ENCODE measurements at regions of chr6 and their contacts with region 1.

Region 1: DNA sequence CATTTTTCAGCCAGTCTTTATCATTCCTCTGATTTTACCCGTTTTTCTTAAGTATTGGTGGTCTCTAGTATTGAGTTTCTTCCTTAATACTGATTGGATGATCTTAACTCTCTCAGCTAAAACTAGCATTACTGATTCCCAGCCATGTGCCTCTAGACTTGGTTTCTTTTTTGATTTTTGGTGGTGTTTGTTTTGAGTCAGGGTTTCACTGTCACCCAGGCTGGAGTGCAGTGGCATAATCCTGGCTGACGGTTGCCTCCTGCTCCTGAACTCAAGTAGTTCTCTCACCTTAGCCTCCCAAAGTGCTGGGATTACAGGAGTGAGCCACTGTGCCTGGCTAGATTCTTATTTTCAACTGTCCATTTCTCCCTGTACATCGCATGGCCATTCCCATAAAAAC is 24.9 kb downstream of the DPPA5 start:
- DNase-seq: no peak
- H3K4me3 ChIP-seq: no peak overlapping the region
- H3K4me3 Mint-ChIP-seq: no peak overlapping the region
- H3K27ac Mint-ChIP-seq: no peak overlapping the region
- H3K4me1 ChIP-seq: no peaks in the 10 kb centered on the region
- H3K4me1 Mint-ChIP-seq: peaks cover 7% of the 10 kb centered on the region
- H3K27me3 ChIP-seq: no peaks in the 10 kb centered on the region
- H3K27me3 Mint-ChIP-seq: peaks cover 8% of the 10 kb centered on the region
- CTCF ChIP-seq: no peak

Region 2: GRCh38 chr6:73129653-73130443 is 199.4 kb before region 1 on chr6:
- CTCF ChIA-PET with region 1: no interaction called
- POLR2A ChIA-PET with region 1: no interaction called
- intact Hi-C with region 1: loop called (anchors 5 kb)
- DNase-seq: peak; percentile 73 to 88
- H3K4me3 ChIP-seq: no peak overlapping the region
- H3K4me3 Mint-ChIP-seq: no peak overlapping the region
- H3K27ac Mint-ChIP-seq: no peak overlapping the region
- H3K4me1 ChIP-seq: no peaks in the 10 kb centered on the region
- H3K4me1 Mint-ChIP-seq: no peaks in the 10 kb centered on the region
- H3K27me3 ChIP-seq: no peaks in the 10 kb centered on the region; the same call in 1 of the 2 replicates
- H3K27me3 Mint-ChIP-seq: peaks cover 13% of the 10 kb centered on the region
- CTCF ChIP-seq: peak; percentile 97

Region 3: GRCh38 chr6:73180763-73181619 is 148.2 kb before region 1 on chr6:
- CTCF ChIA-PET with region 1: interaction called, 3 read pairs
- POLR2A ChIA-PET with region 1: no interaction called
- intact Hi-C with region 1: loop called (anchors 5 kb)
- DNase-seq: peak in 1 of 2 experiments; percentile 17
- H3K4me3 ChIP-seq: no peak overlapping the region
- H3K4me3 Mint-ChIP-seq: no peak overlapping the region
- H3K27ac Mint-ChIP-seq: no peak overlapping the region
- H3K4me1 ChIP-seq: no peaks in the 10 kb centered on the region
- H3K4me1 Mint-ChIP-seq: no peaks in the 10 kb centered on the region
- H3K27me3 ChIP-seq: no peaks in the 10 kb centered on the region
- H3K27me3 Mint-ChIP-seq: peaks cover 4% of the 10 kb centered on the region
- CTCF ChIP-seq: peak; percentile 58 to 86

Region 4: DNA sequence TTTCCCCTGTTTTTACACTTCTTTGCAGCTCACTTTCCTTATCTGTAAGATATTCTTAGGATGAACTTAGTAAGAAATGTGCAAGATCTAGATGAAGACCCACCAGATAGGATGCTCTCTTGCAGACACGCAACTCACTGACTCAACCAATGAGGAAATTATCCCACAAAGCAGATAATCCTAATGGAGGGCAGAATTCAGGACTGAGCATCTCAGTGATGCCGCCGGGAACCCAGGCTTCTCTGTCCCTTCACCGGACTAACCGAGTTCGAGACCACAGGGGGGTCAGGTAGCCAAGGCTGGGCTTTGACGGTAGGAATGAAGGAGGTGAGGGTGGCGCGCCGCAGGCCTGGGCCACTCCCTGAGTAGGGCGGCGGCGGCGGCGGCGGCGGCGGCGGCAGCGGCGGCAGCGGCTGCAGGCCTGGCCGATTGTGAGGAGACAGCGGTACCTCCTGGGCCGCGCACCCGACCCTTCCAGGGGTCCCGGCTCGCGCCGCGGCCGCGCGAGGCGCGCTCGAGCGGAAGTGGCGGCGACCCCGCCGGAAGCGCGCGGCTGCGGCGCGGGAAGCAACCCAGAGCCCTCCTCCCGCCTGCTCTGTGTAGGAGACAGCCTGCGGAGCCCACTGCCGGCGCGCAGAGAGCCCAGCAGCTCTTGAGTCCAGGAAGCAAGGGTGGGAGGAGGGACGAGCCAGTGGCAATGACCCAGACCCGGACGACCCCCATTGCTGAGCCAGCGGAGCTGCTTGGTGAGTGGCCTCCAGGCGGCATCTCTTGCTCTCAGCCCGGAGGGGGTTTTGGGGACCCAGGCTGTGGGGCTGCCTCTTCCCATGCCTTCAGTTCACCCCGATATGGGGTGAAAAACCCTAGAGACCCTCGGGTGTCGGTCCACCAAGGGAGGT is 66.3 kb before region 1 on chr6 and contains the start of gene KHDC1:
- CTCF ChIA-PET with region 1: no interaction called
- POLR2A ChIA-PET with region 1: no interaction called
- intact Hi-C with region 1: no loop called
- DNase-seq: peak; percentile 62 to 66
- H3K4me3 ChIP-seq: peak within 1 kb of the TSS; percentile 78
- H3K4me3 Mint-ChIP-seq: peak within 1 kb of the TSS; percentile 76
- H3K27ac Mint-ChIP-seq: peak within 1 kb of the TSS; percentile 5
- H3K4me1 ChIP-seq: peaks cover 16% of the 10 kb centered on the region
- H3K4me1 Mint-ChIP-seq: peaks cover 7% of the 10 kb centered on the region
- H3K27me3 ChIP-seq: no peaks in the 10 kb centered on the region
- H3K27me3 Mint-ChIP-seq: no peaks in the 10 kb centered on the region
- CTCF ChIP-seq: no peak
- total RNA-seq, gene KHDC1: 8.1 and 8.6 TPM in 2 replicates

Region 5: DNA sequence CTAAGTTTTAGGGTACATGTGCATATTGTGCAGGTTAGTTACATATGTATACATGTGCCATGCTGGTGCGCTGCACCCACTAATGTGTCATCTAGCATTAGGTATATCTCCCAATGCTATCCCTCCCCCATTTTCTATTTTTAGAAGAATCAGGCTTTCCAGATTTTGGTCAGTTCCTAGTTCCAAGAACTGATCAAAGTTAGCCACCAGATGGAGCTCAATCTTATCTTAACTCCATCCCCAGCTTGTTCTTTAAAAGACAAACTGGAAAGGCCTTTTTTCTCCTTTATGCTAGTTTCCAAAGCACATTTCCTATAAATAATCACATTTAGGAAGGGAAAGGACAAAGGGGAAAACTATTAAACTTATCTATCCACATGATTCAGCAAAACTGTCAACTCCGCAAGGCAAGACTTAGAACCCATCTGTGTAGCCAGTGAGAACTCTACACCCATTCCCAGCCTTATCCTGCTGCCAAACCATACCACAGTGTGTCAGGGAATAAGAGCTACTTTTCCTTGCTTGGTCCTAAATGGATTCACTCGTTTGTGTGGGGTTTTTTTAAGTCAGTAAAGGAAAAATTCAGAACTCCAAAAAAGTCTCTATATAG is 43.4 kb before region 1 on chr6:
- CTCF ChIA-PET with region 1: interaction called, 60 read pairs
- POLR2A ChIA-PET with region 1: interaction called, 3 read pairs
- intact Hi-C with region 1: loop called (anchors 1 kb)
- DNase-seq: peak in 1 of 2 experiments; percentile 42
- H3K4me3 ChIP-seq: no peak overlapping the region
- H3K4me3 Mint-ChIP-seq: no peak overlapping the region
- H3K27ac Mint-ChIP-seq: no peak overlapping the region
- H3K4me1 ChIP-seq: peaks cover 23% of the 10 kb centered on the region; the same call in 1 of the 2 replicates
- H3K4me1 Mint-ChIP-seq: peaks cover 9% of the 10 kb centered on the region
- H3K27me3 ChIP-seq: no peaks in the 10 kb centered on the region
- H3K27me3 Mint-ChIP-seq: no peaks in the 10 kb centered on the region
- CTCF ChIP-seq: peak; percentile 19 to 56

Region 6: DNA sequence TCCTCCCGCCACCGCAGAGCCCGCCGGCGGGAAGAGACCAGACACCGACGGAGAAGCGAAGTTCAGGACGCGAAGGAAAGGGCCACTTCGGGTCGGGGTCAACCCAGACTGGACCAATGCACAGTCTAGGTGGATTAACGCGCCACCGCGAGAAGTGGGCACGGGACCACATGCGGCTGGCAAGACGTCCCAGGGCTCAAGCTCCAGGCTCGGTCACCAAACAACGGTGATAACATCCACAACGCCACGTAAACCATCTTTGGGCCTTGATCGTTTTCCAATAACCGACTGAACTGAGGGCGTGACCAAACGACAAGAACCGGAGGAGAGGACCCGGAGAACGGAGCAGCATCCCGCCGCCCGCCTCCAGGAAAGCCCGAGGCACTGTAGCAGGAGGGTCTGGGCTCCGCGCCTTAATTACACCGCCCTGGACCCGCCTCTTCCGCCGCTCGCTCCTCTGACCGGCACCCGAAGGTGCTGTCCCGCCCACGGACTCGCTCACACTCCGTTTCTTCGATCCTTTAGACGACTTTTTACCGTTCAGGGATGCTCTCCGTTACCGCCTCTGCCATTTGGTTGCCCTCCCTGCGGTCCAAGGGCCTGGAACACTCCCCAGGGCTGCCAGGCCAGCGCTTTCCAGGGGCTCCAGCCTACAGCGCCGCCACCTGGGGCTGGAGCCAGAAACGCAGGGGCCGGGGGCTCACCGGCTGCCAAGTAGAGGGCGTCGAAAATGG is 19.3 kb before region 1 on chr6:
- CTCF ChIA-PET with region 1: interaction called, 22 read pairs
- POLR2A ChIA-PET with region 1: no interaction called
- intact Hi-C with region 1: no loop called
- DNase-seq: peak; percentile 74 to 77
- H3K4me3 ChIP-seq: peak overlapping the region; percentile 52
- H3K4me3 Mint-ChIP-seq: peak overlapping the region; percentile 100
- H3K27ac Mint-ChIP-seq: peak overlapping the region; percentile 98
- H3K4me1 ChIP-seq: peaks cover 5% of the 10 kb centered on the region; the same call in 1 of the 2 replicates
- H3K4me1 Mint-ChIP-seq: peaks cover 15% of the 10 kb centered on the region
- H3K27me3 ChIP-seq: no peaks in the 10 kb centered on the region
- H3K27me3 Mint-ChIP-seq: no peaks in the 10 kb centered on the region
- CTCF ChIP-seq: peak; percentile 40 to 87

Region 7: DNA sequence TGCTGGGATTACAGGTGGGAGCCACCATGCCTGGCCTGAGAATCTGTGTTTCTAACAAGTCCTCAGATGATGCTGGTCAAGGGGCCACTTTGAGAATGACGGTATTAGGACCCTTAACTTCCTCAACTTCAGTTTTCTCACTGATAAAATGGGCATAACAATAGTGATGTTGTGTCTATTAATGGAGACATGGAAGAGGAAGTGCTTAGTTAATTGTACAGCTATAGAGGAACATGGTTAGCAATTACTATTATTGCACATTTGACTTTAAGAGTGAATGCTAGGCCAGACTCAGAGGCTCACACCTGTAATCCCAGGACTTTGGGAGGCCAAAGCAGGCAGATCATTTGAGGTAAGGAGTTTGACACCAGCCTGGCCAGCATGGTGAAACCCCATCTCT is 12.1 kb after region 1 on chr6:
- CTCF ChIA-PET with region 1: no interaction called
- POLR2A ChIA-PET with region 1: no interaction called
- intact Hi-C with region 1: no loop called
- DNase-seq: no peak
- H3K4me3 ChIP-seq: no peak overlapping the region
- H3K4me3 Mint-ChIP-seq: no peak overlapping the region
- H3K27ac Mint-ChIP-seq: no peak overlapping the region
- H3K4me1 ChIP-seq: peaks cover 7% of the 10 kb centered on the region; the same call in 1 of the 2 replicates
- H3K4me1 Mint-ChIP-seq: peaks cover 13% of the 10 kb centered on the region
- H3K27me3 ChIP-seq: no peaks in the 10 kb centered on the region
- H3K27me3 Mint-ChIP-seq: no peaks in the 10 kb centered on the region
- CTCF ChIP-seq: no peak

Region 8: DNA sequence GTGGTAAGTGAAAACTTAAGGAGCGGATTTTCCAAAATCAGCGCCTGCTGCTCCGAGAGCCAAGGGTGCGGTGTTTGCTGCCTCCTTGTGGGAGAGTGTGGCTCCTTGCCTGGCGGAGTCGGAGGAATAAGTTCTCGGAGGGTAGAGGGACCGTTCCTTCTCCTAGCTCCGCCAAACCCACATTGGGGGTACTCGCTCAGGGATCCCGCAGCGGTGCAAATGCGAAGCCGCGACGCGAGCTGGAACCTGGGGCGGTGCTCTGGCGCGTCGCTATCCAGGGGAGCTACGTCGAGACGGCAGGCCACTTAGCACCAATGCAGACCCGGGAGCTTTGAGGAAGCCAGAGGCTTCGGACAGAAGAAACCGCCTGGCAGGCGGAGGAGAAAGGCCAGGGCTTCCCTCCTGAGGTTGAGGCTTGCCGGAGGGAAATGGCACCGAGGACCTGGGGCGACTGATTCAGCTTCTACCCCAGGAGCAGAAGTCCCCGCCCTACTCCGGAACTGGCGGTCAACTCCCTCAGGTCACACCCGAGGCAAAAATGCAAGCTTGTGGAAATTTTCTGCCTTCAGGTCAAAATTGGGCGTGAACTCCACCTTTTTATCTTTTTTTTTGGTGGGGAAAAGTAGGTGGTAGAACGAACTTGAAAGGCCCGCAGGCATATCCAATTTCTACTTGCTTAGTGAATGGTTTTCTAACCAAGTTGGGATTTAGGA is 59.8 kb after region 1 on chr6:
- CTCF ChIA-PET with region 1: interaction called, 8 read pairs
- POLR2A ChIA-PET with region 1: no interaction called
- intact Hi-C with region 1: loop called (anchors 2 kb)
- DNase-seq: peak; percentile 80 to 85
- H3K4me3 ChIP-seq: peak overlapping the region; percentile 63
- H3K4me3 Mint-ChIP-seq: peak overlapping the region; percentile 87
- H3K27ac Mint-ChIP-seq: peak overlapping the region; percentile 90
- H3K4me1 ChIP-seq: no peaks in the 10 kb centered on the region
- H3K4me1 Mint-ChIP-seq: no peaks in the 10 kb centered on the region
- H3K27me3 ChIP-seq: no peaks in the 10 kb centered on the region
- H3K27me3 Mint-ChIP-seq: no peaks in the 10 kb centered on the region
- CTCF ChIP-seq: peak; percentile 79 to 81

Region 9: DNA sequence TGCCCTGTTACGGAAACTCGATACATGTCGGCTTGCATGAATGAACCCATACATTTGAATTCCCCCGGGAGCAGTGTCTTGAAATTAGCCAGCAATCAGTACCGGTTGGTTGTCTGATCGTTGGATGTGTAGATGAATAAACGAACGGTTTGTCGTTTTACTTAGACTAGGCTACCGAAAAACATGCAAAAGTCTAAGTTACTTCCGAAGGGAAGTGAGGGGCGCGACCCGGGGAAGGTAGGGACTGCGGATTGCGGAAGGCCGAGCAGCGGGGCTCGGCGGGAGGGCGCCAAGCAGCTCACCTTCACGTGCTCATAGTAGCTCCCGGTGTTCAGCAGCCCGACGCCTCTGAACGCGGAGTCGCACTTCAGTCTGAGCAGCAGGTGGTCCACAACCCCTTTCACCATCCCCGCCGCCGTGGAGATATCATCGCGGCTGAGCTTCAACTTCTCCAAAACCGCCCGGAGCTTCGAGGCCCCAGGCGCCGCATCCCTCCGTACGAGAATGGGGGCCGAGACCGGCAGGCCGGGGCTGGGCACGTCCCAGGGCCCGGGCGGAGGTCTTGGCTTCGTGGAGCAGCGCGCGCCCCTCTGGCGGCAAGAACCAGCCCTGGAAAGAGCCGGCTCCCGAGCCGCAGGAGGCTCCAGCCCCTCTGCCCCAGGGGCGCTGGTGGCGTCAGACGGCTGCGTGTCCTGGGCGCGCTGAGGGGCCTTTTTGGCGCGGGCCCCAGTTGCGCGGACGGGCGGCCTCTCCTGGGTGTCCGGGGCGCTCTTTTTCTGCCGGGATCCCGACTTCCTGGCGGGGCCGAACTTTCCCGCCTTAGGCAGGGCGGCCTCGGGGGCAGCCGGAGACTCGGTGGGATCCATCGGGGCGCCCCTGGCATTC is 122.3 kb after region 1 on chr6:
- CTCF ChIA-PET with region 1: no interaction called
- POLR2A ChIA-PET with region 1: interaction called, 13 read pairs
- intact Hi-C with region 1: no loop called
- DNase-seq: peak; percentile 56 to 71
- H3K4me3 ChIP-seq: peak overlapping the region; percentile 73
- H3K4me3 Mint-ChIP-seq: peak overlapping the region; percentile 80
- H3K27ac Mint-ChIP-seq: peak overlapping the region; percentile 52
- H3K4me1 ChIP-seq: peaks cover 3% of the 10 kb centered on the region; the same call in 1 of the 2 replicates
- H3K4me1 Mint-ChIP-seq: peaks cover 16% of the 10 kb centered on the region
- H3K27me3 ChIP-seq: no peaks in the 10 kb centered on the region
- H3K27me3 Mint-ChIP-seq: no peaks in the 10 kb centered on the region
- CTCF ChIP-seq: no peak

Measured in Caco-2 (cell line).